Dorsolateral prefrontal cortex (tissue), 120 donors: ENCODE measurements at regions of chr1 and their contacts with region 1.

Region 1: GRCh38 chr1:38919130-38919529 is 22.5 kb downstream of the RHBDL2 start:
- DNase-seq: peak in 9 of 10 donors; percentile 36 to 70 (median 63)
- H3K4me3 ChIP-seq: peak overlapping the region in 22 of 59 donors; percentile 0 to 43 (median 22)
- H3K27ac ChIP-seq: peak overlapping the region in 57 of 59 donors; percentile 23 to 89 (median 78)
- H3K27me3 ChIP-seq: no peaks in the 10 kb centered on the region
- CTCF ChIP-seq: peak in 52 of 56 donors; percentile 21 to 75 (median 47)

Region 2: GRCh38 chr1:38941527-38942019 is 22.4 kb after region 1 on chr1 and contains the start of gene RHBDL2:
- intact Hi-C with region 1: loop called in 1 of 2 experiments (anchors 1 kb)
- DNase-seq: peak; percentile 39 to 78 (median 64)
- H3K4me3 ChIP-seq: peak within 1 kb of the TSS; percentile 26 to 72 (median 51)
- H3K27ac ChIP-seq: peak within 1 kb of the TSS in 12 of 59 donors; percentile 5 to 64 (median 34)
- H3K27me3 ChIP-seq: no peaks in the 10 kb centered on the region
- CTCF ChIP-seq: no peak
- total RNA-seq, gene RHBDL2: 1.0 to 34.7 (median 6.8) TPM

Region 3: DNA sequence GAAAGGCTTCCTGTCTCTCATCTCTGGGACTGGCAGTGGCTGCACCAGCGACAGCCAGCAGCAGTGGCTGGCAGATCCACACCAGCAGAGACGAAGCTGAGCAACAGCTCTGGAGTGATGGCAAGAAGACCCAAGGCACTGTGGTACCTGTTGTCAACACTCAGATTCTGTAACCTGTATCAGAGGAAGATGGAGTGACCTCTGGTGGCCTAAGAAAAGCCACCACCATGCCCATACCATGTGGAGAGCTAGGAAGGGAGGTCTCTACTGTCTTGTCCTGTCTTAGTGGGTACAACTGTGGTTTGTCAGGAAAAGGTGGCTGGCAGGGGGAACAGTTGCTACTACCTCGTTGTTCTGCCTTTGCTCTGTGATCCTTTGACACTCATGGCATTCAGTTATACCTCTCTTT is 45.0 kb after region 1 on chr1:
- intact Hi-C with region 1: loop called in 1 of 2 experiments (anchors 2 kb)
- DNase-seq: peak in 2 of 10 donors; percentile 9 to 28
- H3K4me3 ChIP-seq: no peak overlapping the region
- H3K27ac ChIP-seq: peak overlapping the region in 1 of 59 donors; percentile 28
- H3K27me3 ChIP-seq: no peaks in the 10 kb centered on the region
- CTCF ChIP-seq: peak in 38 of 56 donors; percentile 9 to 56 (median 29)

Region 4: GRCh38 chr1:39091845-39092645 is 172.9 kb after region 1 on chr1:
- intact Hi-C with region 1: loop called (anchors 5 kb)
- DNase-seq: peak; percentile 61 to 82 (median 75)
- H3K4me3 ChIP-seq: no peak overlapping the region
- H3K27ac ChIP-seq: peak overlapping the region in 49 of 59 donors; percentile 3 to 93 (median 81)
- H3K27me3 ChIP-seq: no peaks in the 10 kb centered on the region
- CTCF ChIP-seq: peak in 55 of 56 donors; percentile 10 to 77 (median 68)